Activated T-helper 1 cell treated with anti-CD3 and anti-CD28 coated beads, Interleukin-12 subunit alpha, Interleukin-12 subunit beta, Interleukin-2, Interleukin-4 antibody, amounts not matched to agents 30 ng/mL and 10 ng/mL and 1 ng/mL, durations not matched to agents 14 hours and 24 hours and 36 hours (primary cell): ENCODE measurements at regions of chr7 and their contacts with region 1.

Region 1: DNA sequence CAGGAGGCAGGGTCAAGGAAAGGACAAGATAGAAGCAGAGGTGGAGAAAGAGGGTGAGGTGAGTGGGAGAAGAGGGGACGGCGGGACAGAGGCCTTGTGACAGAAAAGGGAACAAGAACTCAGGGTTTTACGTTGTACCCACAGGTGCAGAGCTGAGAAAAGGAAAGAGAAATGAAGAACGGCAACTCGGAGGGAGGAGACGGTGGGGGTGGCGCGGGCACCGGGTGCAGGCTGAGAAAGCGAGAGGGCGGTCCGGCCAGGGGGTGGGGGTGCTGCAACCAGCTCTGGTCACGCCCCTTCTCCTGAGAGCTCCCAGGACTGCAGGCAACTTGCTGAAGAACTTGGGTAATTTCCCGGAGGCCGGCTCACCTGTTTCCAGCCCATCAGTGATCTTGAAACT is 65.3 kb downstream of the CARD11 start:
- DNase-seq: peak; percentile 78
- H3K4me3 Mint-ChIP-seq: peak overlapping the region; percentile 67
- H3K27ac Mint-ChIP-seq: peak overlapping the region; percentile 89
- H3K4me1 Mint-ChIP-seq: peaks cover 64% of the 10 kb centered on the region
- H3K27me3 Mint-ChIP-seq: no peaks in the 10 kb centered on the region

Region 2: GRCh38 chr7:2870471-2870931 is 107.9 kb before region 1 on chr7:
- intact Hi-C with region 1: loop called (anchors 5 kb)
- DNase-seq: peak; percentile 59
- H3K4me3 Mint-ChIP-seq: peak overlapping the region; percentile 61
- H3K27ac Mint-ChIP-seq: peak overlapping the region; percentile 52
- H3K4me1 Mint-ChIP-seq: peaks cover 55% of the 10 kb centered on the region
- H3K27me3 Mint-ChIP-seq: no peaks in the 10 kb centered on the region

Region 3: DNA sequence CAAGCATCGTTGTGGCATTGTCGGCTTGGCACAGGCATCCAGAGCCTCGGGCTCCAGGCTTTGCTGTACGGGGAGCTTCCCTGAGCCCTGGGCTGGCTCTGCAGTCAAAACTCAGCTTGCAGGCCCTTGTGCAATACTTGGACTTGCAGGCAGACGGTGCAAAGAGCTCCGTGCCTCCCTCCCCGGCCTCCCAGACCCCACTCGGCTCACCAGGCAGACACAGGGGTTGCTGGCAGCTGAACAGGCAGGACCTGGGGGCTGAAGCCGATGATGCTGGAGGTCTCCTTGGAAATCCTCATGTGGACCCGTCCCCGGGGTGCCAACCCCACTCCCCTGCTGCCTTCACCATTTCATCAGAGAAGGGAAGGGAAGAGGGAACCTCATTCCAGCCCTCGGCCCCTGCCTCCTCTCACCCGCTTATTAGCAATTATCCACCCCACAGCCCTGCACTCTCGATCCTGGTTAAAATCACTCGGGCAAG is 74.7 kb before region 1 on chr7:
- intact Hi-C with region 1: loop called (anchors 1 kb)
- DNase-seq: no peak
- H3K4me3 Mint-ChIP-seq: no peak overlapping the region
- H3K27ac Mint-ChIP-seq: peak overlapping the region; percentile 87
- H3K4me1 Mint-ChIP-seq: peaks cover 30% of the 10 kb centered on the region
- H3K27me3 Mint-ChIP-seq: no peaks in the 10 kb centered on the region

Region 4: DNA sequence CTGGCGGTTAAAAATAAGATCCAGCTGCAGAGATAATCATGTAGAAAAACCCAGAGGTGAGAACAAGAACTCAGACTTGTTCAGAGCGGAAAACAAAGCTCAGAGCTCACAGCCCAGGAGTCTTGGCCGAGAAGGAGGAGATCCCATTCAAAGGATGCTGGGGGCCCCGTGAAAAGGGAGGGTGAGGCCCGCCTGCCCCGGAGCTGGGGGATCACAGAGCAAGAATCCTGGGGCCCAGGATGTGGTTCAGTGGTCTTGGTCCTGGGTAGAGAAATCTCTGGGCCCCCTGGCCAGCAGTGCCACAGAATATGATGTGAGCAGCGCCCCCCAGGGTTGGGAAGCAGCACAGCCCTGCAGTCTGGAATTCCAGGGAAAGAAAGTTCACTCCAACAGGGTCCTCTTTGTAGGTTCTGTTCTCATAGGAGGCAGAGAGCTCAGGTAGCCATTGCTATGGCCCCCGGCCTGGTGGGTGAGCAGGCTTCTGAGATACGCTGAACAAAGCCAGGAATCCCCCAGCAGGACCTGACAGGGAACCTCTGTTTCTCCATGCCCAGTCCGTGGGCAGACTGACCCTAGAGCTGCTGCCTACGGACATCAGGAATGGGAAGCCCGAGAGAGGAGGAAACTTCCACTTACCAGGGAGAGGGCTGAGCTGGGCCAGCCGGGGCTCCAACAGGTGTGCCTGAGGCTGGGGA is 56.6 kb before region 1 on chr7:
- intact Hi-C with region 1: no loop called
- DNase-seq: no peak
- H3K4me3 Mint-ChIP-seq: no peak overlapping the region
- H3K27ac Mint-ChIP-seq: no peak overlapping the region
- H3K4me1 Mint-ChIP-seq: peaks cover 14% of the 10 kb centered on the region
- H3K27me3 Mint-ChIP-seq: no peaks in the 10 kb centered on the region

Region 5: DNA sequence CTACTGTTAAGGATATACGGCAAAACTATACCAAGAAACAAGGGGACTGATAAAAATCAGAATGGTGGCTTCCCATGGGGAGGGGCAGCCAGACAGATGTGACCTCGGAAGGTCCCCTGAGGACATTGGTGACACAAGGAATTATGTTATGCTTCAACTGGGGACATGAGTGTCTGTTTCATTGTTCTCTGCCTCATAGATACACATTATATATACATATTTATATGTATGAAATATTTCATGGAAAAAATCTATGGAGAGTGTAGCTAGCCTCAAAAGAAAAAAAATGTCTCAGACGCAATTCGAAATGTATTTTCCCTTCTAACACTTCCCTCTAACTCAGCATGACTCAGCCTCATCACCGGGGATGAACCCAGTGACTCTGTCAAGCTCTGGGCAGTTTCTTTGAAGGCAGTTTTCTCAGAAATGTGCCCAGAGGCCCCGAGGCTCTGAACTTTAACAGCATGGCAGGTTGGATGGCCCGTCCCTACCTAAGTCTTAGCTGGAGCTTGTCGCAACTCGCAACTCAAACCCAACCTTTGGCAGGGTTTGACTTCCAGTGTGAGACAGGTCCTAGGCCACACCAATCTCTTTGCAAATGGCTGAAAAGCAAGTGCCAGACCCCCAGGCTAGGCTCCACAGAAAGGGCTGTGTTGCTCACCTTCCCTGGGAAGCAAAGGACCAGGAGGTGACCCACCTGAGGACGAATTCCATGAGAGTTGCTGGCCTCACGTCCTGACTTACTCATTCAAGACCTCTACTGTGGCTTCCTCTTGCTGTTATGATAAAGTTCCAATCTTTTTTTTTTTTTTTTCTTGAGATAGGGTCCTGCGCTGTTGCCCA is 21.7 kb before region 1 on chr7:
- intact Hi-C with region 1: loop called (anchors 1 kb)
- DNase-seq: peak; percentile 44
- H3K4me3 Mint-ChIP-seq: peak overlapping the region; percentile 27
- H3K27ac Mint-ChIP-seq: peak overlapping the region; percentile 92
- H3K4me1 Mint-ChIP-seq: peaks cover 71% of the 10 kb centered on the region
- H3K27me3 Mint-ChIP-seq: no peaks in the 10 kb centered on the region

Region 6: DNA sequence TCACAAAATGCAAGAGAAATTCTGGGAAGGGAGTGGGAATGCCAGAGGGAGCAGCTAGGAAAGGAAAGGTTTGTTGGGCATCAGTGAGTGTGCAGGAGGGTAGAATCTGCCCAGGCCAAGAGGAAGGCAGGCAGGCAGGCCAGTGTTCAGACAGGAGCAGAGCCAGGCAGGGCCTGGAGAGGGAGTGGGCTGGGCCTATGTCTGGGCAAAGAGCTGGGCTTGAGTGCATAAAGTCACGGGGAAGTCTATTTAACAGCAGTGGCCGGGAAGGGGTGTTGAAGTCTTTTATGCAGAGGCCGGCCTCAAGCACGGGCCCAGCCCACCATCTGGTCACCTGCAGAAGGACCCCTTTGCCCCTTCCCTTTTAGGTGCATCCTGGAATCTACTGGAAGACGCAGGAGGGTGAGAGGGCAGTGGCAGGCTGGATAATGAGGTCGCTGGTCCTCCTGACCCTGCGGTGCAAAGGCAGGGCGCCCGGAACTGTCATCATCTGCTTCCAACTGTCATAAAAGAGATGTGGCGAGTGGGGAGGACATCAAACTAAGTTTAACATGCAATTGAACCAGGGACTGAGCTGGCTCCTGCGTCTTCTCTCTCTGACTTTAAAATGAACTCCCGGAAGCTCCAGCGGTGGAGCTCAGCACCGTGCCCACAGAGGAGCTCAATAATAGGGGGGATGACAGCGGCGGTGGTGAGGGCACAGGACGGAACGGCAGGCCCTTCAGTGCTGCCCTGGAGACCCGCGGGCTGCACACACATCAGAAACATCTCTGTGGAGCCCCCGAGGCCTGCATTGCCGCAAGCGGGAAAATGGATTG is 35.8 kb after region 1 on chr7:
- intact Hi-C with region 1: loop called (anchors 5 kb)
- DNase-seq: no peak
- H3K4me3 Mint-ChIP-seq: no peak overlapping the region
- H3K27ac Mint-ChIP-seq: no peak overlapping the region
- H3K4me1 Mint-ChIP-seq: peaks cover 29% of the 10 kb centered on the region
- H3K27me3 Mint-ChIP-seq: no peaks in the 10 kb centered on the region

Region 7: DNA sequence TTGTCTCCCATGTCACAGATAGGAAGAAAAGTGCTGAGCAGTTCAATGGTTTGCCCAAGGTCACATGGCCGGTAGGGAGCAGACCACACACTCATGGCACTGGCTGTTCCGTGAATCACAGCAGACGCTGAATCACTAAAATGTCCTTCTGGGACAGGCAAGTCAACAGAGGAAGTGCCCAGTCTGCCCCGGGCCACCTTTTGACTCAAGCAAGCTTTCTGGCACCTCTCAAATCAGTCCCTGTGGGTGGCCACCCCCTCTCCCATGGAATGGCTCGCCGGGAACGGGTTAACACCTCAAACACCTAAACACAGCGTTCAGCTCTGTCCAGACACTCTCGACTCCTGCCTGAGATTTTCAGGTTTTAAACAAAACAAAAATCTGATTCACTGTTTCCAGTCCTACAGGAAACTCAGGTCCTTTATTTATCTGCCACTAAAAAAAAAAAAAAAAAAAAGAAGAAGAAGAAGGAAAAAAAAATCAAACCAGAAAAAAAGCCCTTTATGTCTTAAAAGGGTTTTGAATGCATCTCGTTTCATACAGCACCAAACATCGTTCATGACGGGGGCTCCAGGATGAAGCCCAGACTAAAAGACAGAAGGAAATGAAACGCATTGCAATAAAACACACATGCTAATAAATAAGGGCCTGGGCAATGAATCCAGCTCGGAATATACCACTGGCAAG is 49.8 kb after region 1 on chr7:
- intact Hi-C with region 1: loop called (anchors 1 kb)
- DNase-seq: peak; percentile 8
- H3K4me3 Mint-ChIP-seq: peak overlapping the region; percentile 60
- H3K27ac Mint-ChIP-seq: peak overlapping the region; percentile 92
- H3K4me1 Mint-ChIP-seq: peaks cover 60% of the 10 kb centered on the region
- H3K27me3 Mint-ChIP-seq: no peaks in the 10 kb centered on the region

Region 8: GRCh38 chr7:3042861-3043489 is 64.6 kb after region 1 on chr7:
- intact Hi-C with region 1: loop called (anchors 2 kb)
- DNase-seq: peak; percentile 65
- H3K4me3 Mint-ChIP-seq: peak overlapping the region; percentile 97
- H3K27ac Mint-ChIP-seq: peak overlapping the region; percentile 95
- H3K4me1 Mint-ChIP-seq: peaks cover 47% of the 10 kb centered on the region
- H3K27me3 Mint-ChIP-seq: no peaks in the 10 kb centered on the region